CD8-positive, alpha-beta T cell (primary cell): ENCODE measurements at regions of chr17 and their contacts with region 1.

Region 1: GRCh38 chr17:41665566-41666236 is 23.0 kb upstream of the EIF1 start:
- DNase-seq: peak; percentile 77 to 95 (median 89)
- ATAC-seq: peak; percentile 78
- H3K4me3 ChIP-seq: peak overlapping the region; percentile 56 to 61
- H3K4me3 Mint-ChIP-seq: peak overlapping the region; percentile 85
- H3K27ac ChIP-seq: peak overlapping the region; percentile 82 to 97
- H3K27ac Mint-ChIP-seq: peak overlapping the region; percentile 94
- H3K4me1 ChIP-seq: peaks cover 5% of the 10 kb centered on the region
- H3K4me1 Mint-ChIP-seq: peaks cover 24% of the 10 kb centered on the region
- H3K27me3 ChIP-seq: no peaks in the 10 kb centered on the region
- H3K27me3 Mint-ChIP-seq: no peaks in the 10 kb centered on the region
- CTCF ChIP-seq: peak; percentile 96

Region 2: DNA sequence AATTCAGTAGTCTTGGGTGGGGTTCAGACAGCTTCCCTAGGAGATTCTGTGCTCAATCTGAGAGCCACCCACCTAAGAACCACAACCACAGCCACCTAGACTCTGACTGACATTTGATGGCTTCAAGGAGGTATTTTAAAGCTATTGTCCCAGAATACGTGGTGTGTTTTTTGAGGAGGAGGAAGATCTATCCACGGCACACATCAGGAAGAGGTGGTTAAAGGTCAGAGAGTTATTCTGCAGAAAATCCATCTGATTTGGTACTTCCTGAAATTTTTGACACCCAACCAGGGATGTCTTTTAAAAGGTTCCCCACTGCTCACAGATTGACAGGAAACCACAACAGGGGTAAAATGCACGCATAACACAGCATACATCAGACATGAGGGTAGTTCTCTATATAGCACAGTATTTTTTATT is 1043.2 kb before region 1 on chr17:
- CTCF ChIA-PET with region 1: interaction called, 3 read pairs
- POLR2A ChIA-PET with region 1: no interaction called
- intact Hi-C with region 1: loop called in 1 of 2 experiments (anchors 10 kb)
- DNase-seq: peak in 4 of 9 experiments; percentile 32 to 80 (median 62)
- ATAC-seq: peak; percentile 74
- H3K4me3 ChIP-seq: peak overlapping the region in 1 of 2 experiments; percentile 6
- H3K4me3 Mint-ChIP-seq: peak overlapping the region; percentile 54
- H3K27ac ChIP-seq: peak overlapping the region; percentile 2 to 4
- H3K27ac Mint-ChIP-seq: peak overlapping the region; percentile 89
- H3K4me1 ChIP-seq: peaks cover 53% of the 10 kb centered on the region
- H3K4me1 Mint-ChIP-seq: peaks cover 53% of the 10 kb centered on the region
- H3K27me3 ChIP-seq: no peaks in the 10 kb centered on the region
- H3K27me3 Mint-ChIP-seq: no peaks in the 10 kb centered on the region
- CTCF ChIP-seq: no peak

Region 3: DNA sequence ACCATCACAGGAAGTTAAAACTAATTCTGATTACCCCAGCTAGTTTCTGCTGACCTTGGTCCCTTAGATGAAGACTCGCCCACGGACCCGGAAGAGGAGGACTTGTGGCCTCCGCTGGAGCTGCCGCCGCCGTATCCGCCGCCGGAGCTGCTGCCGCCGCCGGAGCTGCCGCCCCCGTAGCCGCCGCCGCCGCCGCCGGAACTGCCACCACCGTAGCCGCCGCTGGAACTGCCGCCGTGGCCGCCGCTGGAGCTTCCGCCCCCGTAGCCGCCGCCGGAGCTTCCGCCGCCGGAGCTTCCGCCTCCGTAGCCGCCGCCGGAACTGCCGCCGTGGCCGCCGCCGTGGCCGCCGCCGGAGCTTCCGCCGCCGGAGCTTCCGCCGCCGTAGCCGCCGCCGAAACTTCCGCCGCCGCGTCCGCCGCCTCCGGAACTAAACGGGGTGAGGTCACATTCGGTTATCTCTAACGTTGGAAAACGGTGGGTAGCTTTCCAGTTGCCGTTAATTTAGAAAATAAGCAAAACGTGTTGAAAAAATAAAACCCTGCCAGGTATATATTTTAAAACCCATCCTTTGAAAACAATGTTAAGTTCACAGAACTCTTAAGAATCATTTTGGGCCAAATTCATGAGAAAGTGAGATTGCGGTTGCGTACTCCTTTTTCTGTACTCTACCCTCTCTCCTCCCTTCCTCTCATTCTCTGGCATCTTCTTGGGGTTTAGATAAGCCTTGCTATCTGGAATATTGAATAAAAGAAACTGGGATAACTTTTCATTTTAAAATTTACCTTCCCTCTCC is 846.8 kb before region 1 on chr17:
- CTCF ChIA-PET with region 1: interaction called, 9 read pairs
- POLR2A ChIA-PET with region 1: interaction called, 8 read pairs
- intact Hi-C with region 1: loop called in 1 of 2 experiments (anchors 2 kb)
- DNase-seq: peak; percentile 70 to 94 (median 85)
- ATAC-seq: peak; percentile 76
- H3K4me3 ChIP-seq: peak overlapping the region; percentile 69 to 77
- H3K4me3 Mint-ChIP-seq: peak overlapping the region; percentile 91
- H3K27ac ChIP-seq: peak overlapping the region; percentile 70 to 79
- H3K27ac Mint-ChIP-seq: peak overlapping the region; percentile 95
- H3K4me1 ChIP-seq: peaks cover 17% of the 10 kb centered on the region
- H3K4me1 Mint-ChIP-seq: peaks cover 26% of the 10 kb centered on the region
- H3K27me3 ChIP-seq: peaks cover 0 to 3% of the 10 kb centered on the region in 2 experiments
- H3K27me3 Mint-ChIP-seq: peaks cover 10% of the 10 kb centered on the region
- CTCF ChIP-seq: no peak

Region 4: GRCh38 chr17:40915199-40915661 is 750.5 kb before region 1 on chr17:
- CTCF ChIA-PET with region 1: interaction called, 57 read pairs
- POLR2A ChIA-PET with region 1: no interaction called
- intact Hi-C with region 1: no loop called
- DNase-seq: peak in 1 of 9 experiments; percentile 11
- ATAC-seq: no peak
- H3K4me3 ChIP-seq: no peak overlapping the region
- H3K4me3 Mint-ChIP-seq: no peak overlapping the region
- H3K27ac ChIP-seq: no peak overlapping the region
- H3K27ac Mint-ChIP-seq: no peak overlapping the region
- H3K4me1 ChIP-seq: no peaks in the 10 kb centered on the region
- H3K4me1 Mint-ChIP-seq: no peaks in the 10 kb centered on the region
- H3K27me3 ChIP-seq: no peaks in the 10 kb centered on the region
- H3K27me3 Mint-ChIP-seq: no peaks in the 10 kb centered on the region
- CTCF ChIP-seq: no peak

Region 5: GRCh38 chr17:41538565-41538991 is 127.1 kb before region 1 on chr17:
- CTCF ChIA-PET with region 1: interaction called, 13 read pairs
- POLR2A ChIA-PET with region 1: no interaction called
- intact Hi-C with region 1: no loop called
- DNase-seq: no peak
- ATAC-seq: no peak
- H3K4me3 ChIP-seq: no peak overlapping the region
- H3K4me3 Mint-ChIP-seq: no peak overlapping the region
- H3K27ac ChIP-seq: no peak overlapping the region
- H3K27ac Mint-ChIP-seq: no peak overlapping the region
- H3K4me1 ChIP-seq: no peaks in the 10 kb centered on the region
- H3K4me1 Mint-ChIP-seq: no peaks in the 10 kb centered on the region
- H3K27me3 ChIP-seq: no peaks in the 10 kb centered on the region
- H3K27me3 Mint-ChIP-seq: peaks cover 10% of the 10 kb centered on the region
- CTCF ChIP-seq: no peak

Region 6: DNA sequence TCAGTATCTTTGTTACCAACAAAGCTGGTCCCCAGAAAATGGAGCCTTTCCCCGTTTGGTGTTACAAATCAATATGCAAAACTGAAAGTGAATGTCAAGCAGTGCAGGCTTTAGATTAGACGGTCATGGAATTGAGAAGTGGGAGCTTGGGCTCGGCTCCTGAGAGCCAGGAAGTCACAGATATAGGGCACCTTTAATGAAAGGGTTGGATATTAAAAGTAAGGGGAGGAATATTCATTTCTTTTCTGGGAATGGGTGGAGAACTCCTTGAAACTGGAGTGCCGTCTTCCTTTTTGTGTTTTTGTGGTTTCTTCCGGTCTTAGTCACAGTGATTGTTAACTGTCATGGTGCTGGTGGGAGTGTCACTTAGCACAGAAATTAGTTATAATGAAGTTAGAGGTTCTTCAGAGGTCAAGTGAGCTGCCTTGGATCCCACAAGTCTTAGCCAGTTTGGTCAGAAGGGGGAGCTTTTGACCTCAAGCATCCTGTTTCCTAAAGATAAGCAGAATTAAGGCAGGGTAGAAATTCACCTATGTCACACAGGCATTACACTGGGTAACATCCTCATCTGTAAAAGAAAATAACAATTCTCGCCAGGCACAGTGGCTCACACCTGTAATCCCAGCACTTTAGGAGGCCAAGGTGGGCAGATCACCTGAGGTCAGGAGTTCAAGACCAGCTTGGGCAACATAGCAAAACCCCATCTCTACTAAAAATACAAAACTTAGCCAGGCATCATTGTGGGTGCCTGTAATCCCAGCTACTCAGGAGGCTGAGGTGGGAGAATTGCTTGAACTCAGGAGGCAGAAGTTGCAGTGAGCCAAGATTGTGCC is 13.4 kb after region 1 on chr17:
- CTCF ChIA-PET with region 1: interaction called, 72 read pairs
- POLR2A ChIA-PET with region 1: interaction called, 12 read pairs
- intact Hi-C with region 1: loop called in 1 of 2 experiments (anchors 1 kb)
- DNase-seq: peak; percentile 15 to 89 (median 60)
- ATAC-seq: peak; percentile 88
- H3K4me3 ChIP-seq: peak overlapping the region; percentile 34 to 52
- H3K4me3 Mint-ChIP-seq: peak overlapping the region; percentile 86
- H3K27ac ChIP-seq: peak overlapping the region; percentile 64 to 74
- H3K27ac Mint-ChIP-seq: peak overlapping the region; percentile 97
- H3K4me1 ChIP-seq: peaks cover 14% of the 10 kb centered on the region
- H3K4me1 Mint-ChIP-seq: peaks cover 24% of the 10 kb centered on the region
- H3K27me3 ChIP-seq: no peaks in the 10 kb centered on the region
- H3K27me3 Mint-ChIP-seq: no peaks in the 10 kb centered on the region
- CTCF ChIP-seq: no peak